ENCODE measurements at regions of chr12 and their contacts with region 1.

Region 1: DNA sequence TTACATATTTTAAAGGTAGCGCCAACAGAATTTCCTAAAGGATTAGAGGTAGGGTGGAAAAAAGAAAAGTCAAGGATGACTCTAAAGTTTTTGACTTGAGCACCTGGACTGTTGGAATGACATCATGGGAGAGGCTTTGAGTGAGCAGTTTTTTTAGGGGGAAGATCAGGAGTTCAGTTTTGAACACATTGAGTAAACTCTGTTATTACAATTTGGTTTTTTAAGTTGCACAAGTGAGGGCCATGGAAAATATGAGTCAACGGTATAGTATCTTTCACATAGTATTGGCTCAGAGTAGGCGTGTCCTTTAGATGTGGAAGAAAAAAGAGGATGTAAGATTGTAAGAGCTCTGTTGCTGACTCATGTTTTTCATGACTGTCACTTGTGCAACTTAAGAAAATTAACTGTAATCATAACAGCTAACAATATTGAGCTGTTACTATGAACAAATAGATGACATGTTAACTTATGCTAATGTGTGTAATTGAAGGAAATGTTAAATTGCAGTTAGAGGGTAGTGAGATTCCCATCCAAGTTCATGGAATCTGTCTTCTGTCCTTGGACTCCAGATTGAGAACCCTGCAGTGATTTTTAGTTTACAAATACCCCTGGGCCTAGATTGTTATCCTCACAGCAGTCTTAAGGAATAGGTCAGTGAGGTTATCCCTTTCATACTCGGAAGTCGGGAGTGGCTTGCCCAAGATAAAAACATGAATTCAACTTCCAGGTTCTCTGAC is 48.1 kb upstream of the ATP2B1 start:
- DNase-seq: peak; percentile 97
- ATAC-seq: peak; percentile 89
- H3K4me3 ChIP-seq: no peak overlapping the region
- H3K27ac ChIP-seq: peak overlapping the region; percentile 90
- H3K4me1 ChIP-seq: peaks cover 44% of the 10 kb centered on the region
- H3K27me3 ChIP-seq: no peaks in the 10 kb centered on the region
- CTCF ChIP-seq: no peak
- EP300 ChIP-seq: peak; percentile 97 to 98
- POLR2A ChIP-seq: no peak
- RAD21 ChIP-seq: no peak

Region 2: DNA sequence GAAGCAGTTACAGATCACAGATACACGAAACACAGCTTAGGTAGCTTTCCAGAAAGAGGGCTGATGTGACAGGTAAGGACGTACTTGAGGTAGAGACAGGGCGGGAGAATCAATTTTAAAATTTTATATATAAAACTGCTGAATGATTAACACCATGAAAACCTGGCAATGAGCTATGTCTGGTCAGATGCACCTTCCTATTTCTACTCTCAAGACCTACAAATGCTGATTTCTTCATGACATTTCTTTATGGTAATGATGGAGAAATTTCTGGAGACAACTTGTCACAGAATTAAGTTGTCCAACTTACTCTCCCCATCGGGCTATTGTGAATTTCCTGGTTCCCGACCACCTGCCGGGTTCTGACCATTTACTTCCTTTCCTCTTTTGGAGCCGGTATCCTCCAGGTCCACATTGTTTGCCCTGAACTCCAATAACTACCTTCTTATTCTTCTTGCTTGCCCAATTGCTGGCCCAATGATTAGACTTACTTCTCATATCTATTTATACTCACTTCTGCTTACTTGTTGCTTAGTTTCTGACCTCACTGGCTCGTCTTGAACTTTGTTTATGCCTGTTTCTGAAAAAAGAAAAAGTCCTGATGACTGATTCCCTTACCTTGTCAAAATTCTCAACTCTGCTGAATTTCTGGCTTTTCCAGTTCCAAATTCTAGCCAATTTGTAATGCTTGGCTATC is 35.3 kb before region 1 on chr12:
- CTCF ChIA-PET with region 1: no interaction called
- POLR2A ChIA-PET with region 1: interaction called, 3 read pairs
- RAD21 ChIA-PET with region 1: interaction called, 9 read pairs
- SMC1A ChIA-PET with region 1: interaction called, 7 read pairs
- in situ Hi-C with region 1: loop called (anchors 5 kb)
- intact Hi-C with region 1: no loop called
- DNase-seq: peak; percentile 34
- ATAC-seq: peak; percentile 97
- H3K4me3 ChIP-seq: peak overlapping the region; percentile 34
- H3K27ac ChIP-seq: peak overlapping the region; percentile 56
- H3K4me1 ChIP-seq: peaks cover 8% of the 10 kb centered on the region; the same call in 1 of the 2 replicates
- H3K27me3 ChIP-seq: no peaks in the 10 kb centered on the region
- CTCF ChIP-seq: no peak
- EP300 ChIP-seq: peak in 1 of 2 experiments; percentile 61; a peak in 2 of 4 replicates
- POLR2A ChIP-seq: no peak
- RAD21 ChIP-seq: no peak

Region 3: GRCh38 chr12:89856431-89856830 is 99.7 kb after region 1 on chr12:
- CTCF ChIA-PET with region 1: no interaction called
- POLR2A ChIA-PET with region 1: no interaction called
- RAD21 ChIA-PET with region 1: interaction called, 6 read pairs
- SMC1A ChIA-PET with region 1: interaction called, 10 read pairs
- in situ Hi-C with region 1: loop called (anchors 5 kb)
- intact Hi-C with region 1: loop called (anchors 2 kb)
- DNase-seq: peak; percentile 85
- ATAC-seq: peak; percentile 90
- H3K4me3 ChIP-seq: no peak overlapping the region
- H3K27ac ChIP-seq: peak overlapping the region; percentile 42
- H3K4me1 ChIP-seq: peaks cover 43% of the 10 kb centered on the region
- H3K27me3 ChIP-seq: no peaks in the 10 kb centered on the region
- CTCF ChIP-seq: no peak
- EP300 ChIP-seq: peak; percentile 97
- POLR2A ChIP-seq: no peak
- RAD21 ChIP-seq: peak; percentile 27; the same call in 1 of the 2 replicates

Region 4: GRCh38 chr12:89862511-89863179 is 105.9 kb after region 1 on chr12:
- CTCF ChIA-PET with region 1: interaction called, 4 read pairs
- POLR2A ChIA-PET with region 1: interaction called, 4 read pairs
- RAD21 ChIA-PET with region 1: interaction called, 12 read pairs
- SMC1A ChIA-PET with region 1: interaction called, 10 read pairs
- in situ Hi-C with region 1: loop called (anchors 5 kb)
- intact Hi-C with region 1: loop called (anchors 2 kb)
- DNase-seq: peak; percentile 79
- ATAC-seq: peak; percentile 75
- H3K4me3 ChIP-seq: peak overlapping the region; percentile 60
- H3K27ac ChIP-seq: peak overlapping the region; percentile 89
- H3K4me1 ChIP-seq: peaks cover 39% of the 10 kb centered on the region
- H3K27me3 ChIP-seq: no peaks in the 10 kb centered on the region
- CTCF ChIP-seq: no peak
- EP300 ChIP-seq: peak in 1 of 2 experiments; percentile 17; a peak in 1 of 4 replicates
- POLR2A ChIP-seq: peak; percentile 58
- RAD21 ChIP-seq: 0 out of 2 replicates have a peak, but pooled peaks have one; percentile 19

Region 5: GRCh38 chr12:90102957-90103652 is 346.4 kb after region 1 on chr12:
- CTCF ChIA-PET with region 1: no interaction called
- POLR2A ChIA-PET with region 1: no interaction called
- RAD21 ChIA-PET with region 1: no interaction called
- SMC1A ChIA-PET with region 1: no interaction called
- in situ Hi-C with region 1: no loop called
- intact Hi-C with region 1: loop called (anchors 5 kb)
- DNase-seq: peak; percentile 24
- ATAC-seq: peak; percentile 98
- H3K4me3 ChIP-seq: no peak overlapping the region
- H3K27ac ChIP-seq: no peak overlapping the region
- H3K4me1 ChIP-seq: no peaks in the 10 kb centered on the region
- H3K27me3 ChIP-seq: no peaks in the 10 kb centered on the region
- CTCF ChIP-seq: peak; percentile 56 to 62 (median 57)
- EP300 ChIP-seq: no peak
- POLR2A ChIP-seq: no peak
- RAD21 ChIP-seq: peak; percentile 63

Region 6: DNA sequence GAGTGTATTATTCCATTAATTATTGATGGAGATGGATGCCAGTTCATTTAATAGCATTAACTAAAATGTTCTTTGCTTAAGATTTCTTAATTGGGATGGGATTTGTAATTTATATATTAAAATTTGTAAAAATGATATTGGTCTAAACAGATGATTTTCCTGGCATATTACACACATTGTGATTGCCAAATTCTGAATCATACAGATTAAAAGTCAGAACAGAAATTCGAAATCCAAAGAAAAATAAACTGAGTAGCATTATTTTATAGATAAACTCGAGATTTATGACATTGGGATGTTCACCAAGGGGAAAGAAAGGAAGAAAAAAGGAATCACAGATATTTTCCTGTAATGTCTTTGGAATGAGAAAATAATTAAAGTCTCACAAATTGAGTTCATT is 717.1 kb after region 1 on chr12:
- CTCF ChIA-PET with region 1: no interaction called
- POLR2A ChIA-PET with region 1: no interaction called
- RAD21 ChIA-PET with region 1: no interaction called
- SMC1A ChIA-PET with region 1: no interaction called
- in situ Hi-C with region 1: no loop called
- intact Hi-C with region 1: no loop called
- DNase-seq: no peak
- ATAC-seq: no peak
- H3K4me3 ChIP-seq: no peak overlapping the region
- H3K27ac ChIP-seq: no peak overlapping the region
- H3K4me1 ChIP-seq: no peaks in the 10 kb centered on the region
- H3K27me3 ChIP-seq: no peaks in the 10 kb centered on the region
- CTCF ChIP-seq: no peak
- EP300 ChIP-seq: no peak
- POLR2A ChIP-seq: no peak
- RAD21 ChIP-seq: no peak

Measured in GM12878 (cell line).